T-cell (primary cell): ENCODE measurements at regions of chr13 and their contacts with region 1.

Region 1: DNA sequence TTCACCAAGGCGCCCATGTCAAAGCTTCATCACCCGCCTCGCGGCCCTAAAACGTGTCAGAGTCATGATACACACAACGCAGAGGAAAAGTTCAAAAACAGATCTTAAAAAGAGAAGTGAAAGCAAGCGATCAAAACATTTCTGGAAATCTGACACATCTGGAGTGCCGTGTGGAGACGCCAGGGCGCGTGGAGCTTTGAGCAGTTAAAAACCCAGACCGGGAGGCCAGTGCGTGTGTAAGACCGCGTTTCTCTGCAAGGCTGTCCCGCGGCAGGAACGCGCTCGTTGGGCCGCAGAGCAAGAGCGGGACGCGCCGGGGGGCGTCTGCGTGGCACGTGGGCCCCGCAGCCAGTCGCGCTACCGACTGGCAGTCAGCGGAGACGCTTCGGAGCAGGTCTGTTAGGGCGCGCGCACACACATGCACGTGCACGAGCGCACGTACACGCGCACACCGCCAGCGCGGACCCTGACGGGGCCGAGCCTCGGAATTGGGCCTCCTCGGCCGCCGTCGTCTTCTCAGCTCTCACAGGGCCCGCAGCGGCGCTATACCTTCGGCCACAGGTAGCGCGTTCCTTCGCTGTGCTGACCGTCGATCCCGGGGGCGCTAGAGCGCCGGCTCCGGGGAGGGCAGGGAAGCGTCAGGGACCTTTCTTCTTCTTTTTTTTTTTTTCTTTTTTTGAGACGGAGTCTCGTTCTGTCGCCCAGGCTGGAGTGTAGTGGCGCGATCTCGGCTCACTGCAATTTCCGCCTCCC is 35.8 kb downstream of the RNF6 start:
- DNase-seq: peak; percentile 80 to 97 (median 87)
- ATAC-seq: peak; percentile 85 to 90 (median 87)
- H3K4me3 ChIP-seq: peak overlapping the region; percentile 76
- H3K4me3 Mint-ChIP-seq: peak overlapping the region; percentile 85 to 94 (median 90)
- H3K27ac ChIP-seq: peak overlapping the region; percentile 66
- H3K27ac Mint-ChIP-seq: peak overlapping the region; percentile 92 to 96
- H3K4me1 ChIP-seq: peaks cover 3 to 18% of the 10 kb centered on the region in 2 experiments
- H3K4me1 Mint-ChIP-seq: peaks cover 20 to 34% (median 22%) of the 10 kb centered on the region in 3 donors
- H3K27me3 ChIP-seq: no peaks in the 10 kb centered on the region
- H3K27me3 Mint-ChIP-seq: no peaks in the 10 kb centered on the region

Region 2: DNA sequence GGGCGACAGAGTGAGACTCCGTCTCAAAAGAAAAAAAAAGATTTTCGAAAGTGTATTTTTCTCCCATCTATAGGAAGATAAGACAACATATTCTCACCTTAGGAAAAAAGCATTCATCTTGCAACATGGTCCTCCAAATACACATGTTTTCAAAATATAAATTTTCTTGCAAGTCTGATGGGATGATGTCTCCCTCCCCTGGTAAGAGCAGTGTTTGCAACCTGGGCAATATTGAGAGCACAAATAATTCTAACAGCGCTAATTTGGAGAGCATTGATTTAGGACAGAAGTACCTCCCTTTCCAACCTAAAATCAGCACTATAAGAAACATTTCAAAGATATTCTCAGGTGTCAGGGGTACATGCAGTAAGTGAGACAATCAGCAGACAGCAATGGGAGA is 73.5 kb before region 1 on chr13:
- CTCF ChIA-PET with region 1: no interaction called
- POLR2A ChIA-PET with region 1: no interaction called
- DNase-seq: no peak
- ATAC-seq: no peak
- H3K4me3 ChIP-seq: no peak overlapping the region
- H3K4me3 Mint-ChIP-seq: no peak overlapping the region
- H3K27ac ChIP-seq: no peak overlapping the region
- H3K27ac Mint-ChIP-seq: no peak overlapping the region
- H3K4me1 ChIP-seq: no peaks in the 10 kb centered on the region
- H3K4me1 Mint-ChIP-seq: no peaks in the 10 kb centered on the region
- H3K27me3 ChIP-seq: peaks cover 0 to 2% of the 10 kb centered on the region in 2 experiments
- H3K27me3 Mint-ChIP-seq: peaks cover 4 to 23% of the 10 kb centered on the region in 2 donors

Region 3: DNA sequence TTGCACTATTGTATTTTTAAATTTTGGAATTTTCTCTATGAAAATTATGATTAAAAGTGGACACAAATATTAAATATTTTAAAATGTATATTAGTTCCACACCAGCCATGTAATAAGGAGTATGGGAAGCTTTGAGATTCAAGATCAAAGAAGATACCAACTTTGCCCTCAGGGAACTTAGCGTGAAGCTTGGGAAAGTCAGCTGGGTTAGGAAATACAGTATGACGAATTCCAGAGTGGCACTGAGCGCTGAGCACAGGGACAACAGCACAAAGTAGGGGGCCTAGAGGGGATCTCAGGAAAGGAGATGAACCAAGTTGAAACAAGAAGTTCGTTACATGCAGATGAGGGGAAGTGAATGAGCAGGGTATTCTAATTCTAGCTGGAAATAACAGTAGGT is 57.6 kb before region 1 on chr13:
- CTCF ChIA-PET with region 1: no interaction called
- POLR2A ChIA-PET with region 1: no interaction called
- DNase-seq: no peak
- ATAC-seq: no peak
- H3K4me3 ChIP-seq: no peak overlapping the region
- H3K4me3 Mint-ChIP-seq: no peak overlapping the region
- H3K27ac ChIP-seq: no peak overlapping the region
- H3K27ac Mint-ChIP-seq: no peak overlapping the region
- H3K4me1 ChIP-seq: no peaks in the 10 kb centered on the region
- H3K4me1 Mint-ChIP-seq: no peaks in the 10 kb centered on the region
- H3K27me3 ChIP-seq: no peaks in the 10 kb centered on the region
- H3K27me3 Mint-ChIP-seq: peaks cover 0 to 3% of the 10 kb centered on the region in 2 donors

Region 4: GRCh38 chr13:26221721-26222519 is 35.6 kb after region 1 on chr13 and contains the start of gene RNF6:
- CTCF ChIA-PET with region 1: interaction called, 6 to 20 read pairs
- POLR2A ChIA-PET with region 1: interaction called, 3 to 5 read pairs
- DNase-seq: peak; percentile 77 to 95 (median 88)
- ATAC-seq: peak; percentile 95 to 97 (median 96)
- H3K4me3 ChIP-seq: peak within 1 kb of the TSS; percentile 94
- H3K4me3 Mint-ChIP-seq: peak within 1 kb of the TSS; percentile 97 to 100 (median 99)
- H3K27ac ChIP-seq: peak within 1 kb of the TSS; percentile 91
- H3K27ac Mint-ChIP-seq: peak within 1 kb of the TSS; percentile 100
- H3K4me1 ChIP-seq: peaks cover 9 to 22% of the 10 kb centered on the region in 2 experiments
- H3K4me1 Mint-ChIP-seq: peaks cover 37 to 46% (median 41%) of the 10 kb centered on the region in 3 donors
- H3K27me3 ChIP-seq: no peaks in the 10 kb centered on the region
- H3K27me3 Mint-ChIP-seq: no peaks in the 10 kb centered on the region
- total RNA-seq, gene RNF6: 35.7 to 45.0 (median 43.6) TPM

Region 5: GRCh38 chr13:26253787-26254582 is 67.7 kb after region 1 on chr13 and contains the start of gene CDK8:
- CTCF ChIA-PET with region 1: interaction called, 6 to 24 read pairs
- POLR2A ChIA-PET with region 1: no interaction called
- DNase-seq: peak; percentile 74 to 93 (median 86)
- ATAC-seq: peak; percentile 87 to 91 (median 88)
- H3K4me3 ChIP-seq: peak within 1 kb of the TSS; percentile 88 to 90
- H3K4me3 Mint-ChIP-seq: peak within 1 kb of the TSS; percentile 82 to 97 (median 89)
- H3K27ac ChIP-seq: peak within 1 kb of the TSS; percentile 76
- H3K27ac Mint-ChIP-seq: peak within 1 kb of the TSS; percentile 65 to 84
- H3K4me1 ChIP-seq: peaks cover 10 to 20% of the 10 kb centered on the region in 2 experiments
- H3K4me1 Mint-ChIP-seq: peaks cover 37 to 50% (median 40%) of the 10 kb centered on the region in 3 donors
- H3K27me3 ChIP-seq: no peaks in the 10 kb centered on the region
- H3K27me3 Mint-ChIP-seq: peaks cover 0 to 2% of the 10 kb centered on the region in 2 donors
- total RNA-seq, gene CDK8: 9.2 to 13.5 (median 12.1) TPM

Region 6: GRCh38 chr13:26482451-26483197 is 296.3 kb after region 1 on chr13:
- CTCF ChIA-PET with region 1: interaction called in 1 of 2 experiments, 11 read pairs
- POLR2A ChIA-PET with region 1: no interaction called
- DNase-seq: peak; percentile 29 to 84 (median 62)
- ATAC-seq: peak; percentile 90 to 97 (median 92)
- H3K4me3 ChIP-seq: no peak overlapping the region
- H3K4me3 Mint-ChIP-seq: peak overlapping the region; percentile 21 to 48 (median 21)
- H3K27ac ChIP-seq: peak overlapping the region; percentile 40
- H3K27ac Mint-ChIP-seq: peak overlapping the region; percentile 63 to 87
- H3K4me1 ChIP-seq: peaks cover 6 to 20% of the 10 kb centered on the region in 2 experiments
- H3K4me1 Mint-ChIP-seq: peaks cover 6 to 20% (median 19%) of the 10 kb centered on the region in 3 donors
- H3K27me3 ChIP-seq: no peaks in the 10 kb centered on the region
- H3K27me3 Mint-ChIP-seq: no peaks in the 10 kb centered on the region

Region 7: GRCh38 chr13:26498656-26499591 is 312.6 kb after region 1 on chr13:
- CTCF ChIA-PET with region 1: interaction called, 41 to 125 read pairs
- POLR2A ChIA-PET with region 1: no interaction called
- DNase-seq: no peak
- ATAC-seq: no peak
- H3K4me3 ChIP-seq: no peak overlapping the region
- H3K4me3 Mint-ChIP-seq: no peak overlapping the region
- H3K27ac ChIP-seq: no peak overlapping the region
- H3K27ac Mint-ChIP-seq: no peak overlapping the region
- H3K4me1 ChIP-seq: no peaks in the 10 kb centered on the region
- H3K4me1 Mint-ChIP-seq: peaks cover 4 to 12% (median 9%) of the 10 kb centered on the region in 3 donors
- H3K27me3 ChIP-seq: peaks cover 2 to 27% of the 10 kb centered on the region in 2 experiments
- H3K27me3 Mint-ChIP-seq: peaks cover 0 to 9% of the 10 kb centered on the region in 2 donors

Region 8: DNA sequence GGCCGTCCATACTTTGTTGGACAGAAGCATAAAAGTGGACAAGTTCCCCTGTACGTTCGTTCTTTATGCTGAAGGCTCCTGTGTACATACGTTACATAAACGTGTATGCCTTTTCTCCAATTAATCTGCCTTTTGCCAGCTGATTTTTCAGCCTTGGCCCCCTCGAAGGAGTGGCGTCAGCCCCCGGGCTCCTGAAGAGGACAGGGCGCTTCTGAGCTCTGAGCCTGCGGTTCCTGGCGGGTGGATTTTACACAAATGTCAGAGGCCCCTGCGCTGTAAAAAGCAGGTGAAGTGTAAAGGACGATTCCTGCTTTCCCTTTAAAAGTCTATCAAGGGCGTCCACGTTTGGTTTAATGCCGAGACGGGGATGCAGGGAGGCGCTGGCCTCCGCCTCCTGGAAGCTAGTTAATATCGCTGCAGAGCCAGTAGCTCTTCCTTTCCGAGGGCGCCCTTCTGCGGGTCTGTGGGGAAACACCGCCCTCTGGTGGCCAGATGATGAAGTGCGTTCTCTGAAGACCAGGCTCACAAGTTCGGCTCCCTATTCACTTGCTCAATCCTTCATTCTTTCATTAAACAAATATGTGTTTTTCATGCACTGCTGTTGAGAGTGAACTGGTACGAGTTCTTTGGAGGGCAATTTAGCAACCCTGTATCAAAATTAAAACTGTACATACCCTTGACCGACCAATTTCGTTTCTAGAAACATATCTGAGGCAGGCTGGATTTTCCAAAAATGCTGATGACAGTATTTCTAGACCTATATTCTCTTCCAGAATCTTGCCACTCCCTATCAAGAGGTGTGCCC is 512.3 kb after region 1 on chr13:
- CTCF ChIA-PET with region 1: interaction called, 40 to 118 read pairs
- POLR2A ChIA-PET with region 1: interaction called in 1 of 2 experiments, 5 read pairs
- DNase-seq: peak; percentile 43 to 88 (median 72)
- ATAC-seq: peak; percentile 82 to 89 (median 82)
- H3K4me3 ChIP-seq: peak overlapping the region in 1 of 2 donors; percentile 5
- H3K4me3 Mint-ChIP-seq: no peak overlapping the region
- H3K27ac ChIP-seq: no peak overlapping the region
- H3K27ac Mint-ChIP-seq: no peak overlapping the region
- H3K4me1 ChIP-seq: peaks cover 0 to 6% of the 10 kb centered on the region in 2 experiments
- H3K4me1 Mint-ChIP-seq: peaks cover 6 to 8% (median 6%) of the 10 kb centered on the region in 3 donors
- H3K27me3 ChIP-seq: peaks cover 0 to 26% of the 10 kb centered on the region in 2 experiments
- H3K27me3 Mint-ChIP-seq: peaks cover 0 to 17% of the 10 kb centered on the region in 2 donors

Region 9: GRCh38 chr13:27449936-27450828 is 1263.9 kb after region 1 on chr13 and contains the start of gene MTIF3:
- CTCF ChIA-PET with region 1: no interaction called
- POLR2A ChIA-PET with region 1: interaction called in 1 of 2 experiments, 10 read pairs
- DNase-seq: peak; percentile 95 to 99 (median 97)
- ATAC-seq: peak; percentile 83 to 90 (median 85)
- H3K4me3 ChIP-seq: peak within 1 kb of the TSS; percentile 95 to 97
- H3K4me3 Mint-ChIP-seq: peak within 1 kb of the TSS; percentile 89 to 95 (median 94)
- H3K27ac ChIP-seq: peak within 1 kb of the TSS; percentile 97
- H3K27ac Mint-ChIP-seq: peak within 1 kb of the TSS; percentile 98 to 99
- H3K4me1 ChIP-seq: peaks cover 31 to 48% of the 10 kb centered on the region in 2 experiments
- H3K4me1 Mint-ChIP-seq: peaks cover 61 to 67% (median 62%) of the 10 kb centered on the region in 3 donors
- H3K27me3 ChIP-seq: no peaks in the 10 kb centered on the region
- H3K27me3 Mint-ChIP-seq: no peaks in the 10 kb centered on the region
- total RNA-seq, gene MTIF3: 45.4 to 74.1 (median 61.4) TPM